Panc1 (cell line): ENCODE measurements at regions of chr1 and their contacts with region 1.

Region 1: GRCh38 chr1:155017041-155017945 is 14.7 kb downstream of the ZBTB7B start:
- DNase-seq: no peak
- ATAC-seq: peak; percentile 92
- H3K4me3 ChIP-seq: peak overlapping the region; percentile 32 to 38
- H3K27ac ChIP-seq: peak overlapping the region; percentile 78
- H3K4me1 ChIP-seq: peaks cover 31% of the 10 kb centered on the region
- H3K27me3 ChIP-seq: no peaks in the 10 kb centered on the region
- CTCF ChIP-seq: peak; percentile 100

Region 2: GRCh38 chr1:154760469-154760933 is 256.8 kb before region 1 on chr1:
- CTCF ChIA-PET with region 1: no interaction called
- POLR2A ChIA-PET with region 1: no interaction called
- in situ Hi-C with region 1: no loop called
- intact Hi-C with region 1: no loop called
- DNase-seq: no peak
- ATAC-seq: peak; percentile 94
- H3K4me3 ChIP-seq: peak overlapping the region; percentile 5 to 30; a peak in 3 of 4 replicates
- H3K27ac ChIP-seq: no peak overlapping the region
- H3K4me1 ChIP-seq: 0 out of 2 replicates have a peak, but pooled peaks cover 2% of the 10 kb centered on the region
- H3K27me3 ChIP-seq: peaks cover 44% of the 10 kb centered on the region
- CTCF ChIP-seq: peak; percentile 93

Region 3: GRCh38 chr1:154812911-154813816 is 204.1 kb before region 1 on chr1:
- CTCF ChIA-PET with region 1: interaction called, 16 read pairs
- POLR2A ChIA-PET with region 1: no interaction called
- in situ Hi-C with region 1: no loop called
- intact Hi-C with region 1: no loop called
- DNase-seq: no peak
- ATAC-seq: no peak
- H3K4me3 ChIP-seq: no peak overlapping the region
- H3K27ac ChIP-seq: no peak overlapping the region
- H3K4me1 ChIP-seq: no peaks in the 10 kb centered on the region
- H3K27me3 ChIP-seq: no peaks in the 10 kb centered on the region
- CTCF ChIP-seq: no peak

Region 4: GRCh38 chr1:155029513-155030242 is 12.4 kb after region 1 on chr1:
- CTCF ChIA-PET with region 1: no interaction called
- POLR2A ChIA-PET with region 1: interaction called, 11 read pairs
- in situ Hi-C with region 1: no loop called
- intact Hi-C with region 1: no loop called
- DNase-seq: no peak
- ATAC-seq: no peak
- H3K4me3 ChIP-seq: no peak overlapping the region
- H3K27ac ChIP-seq: no peak overlapping the region
- H3K4me1 ChIP-seq: no peaks in the 10 kb centered on the region
- H3K27me3 ChIP-seq: no peaks in the 10 kb centered on the region
- CTCF ChIP-seq: no peak

Region 5: DNA sequence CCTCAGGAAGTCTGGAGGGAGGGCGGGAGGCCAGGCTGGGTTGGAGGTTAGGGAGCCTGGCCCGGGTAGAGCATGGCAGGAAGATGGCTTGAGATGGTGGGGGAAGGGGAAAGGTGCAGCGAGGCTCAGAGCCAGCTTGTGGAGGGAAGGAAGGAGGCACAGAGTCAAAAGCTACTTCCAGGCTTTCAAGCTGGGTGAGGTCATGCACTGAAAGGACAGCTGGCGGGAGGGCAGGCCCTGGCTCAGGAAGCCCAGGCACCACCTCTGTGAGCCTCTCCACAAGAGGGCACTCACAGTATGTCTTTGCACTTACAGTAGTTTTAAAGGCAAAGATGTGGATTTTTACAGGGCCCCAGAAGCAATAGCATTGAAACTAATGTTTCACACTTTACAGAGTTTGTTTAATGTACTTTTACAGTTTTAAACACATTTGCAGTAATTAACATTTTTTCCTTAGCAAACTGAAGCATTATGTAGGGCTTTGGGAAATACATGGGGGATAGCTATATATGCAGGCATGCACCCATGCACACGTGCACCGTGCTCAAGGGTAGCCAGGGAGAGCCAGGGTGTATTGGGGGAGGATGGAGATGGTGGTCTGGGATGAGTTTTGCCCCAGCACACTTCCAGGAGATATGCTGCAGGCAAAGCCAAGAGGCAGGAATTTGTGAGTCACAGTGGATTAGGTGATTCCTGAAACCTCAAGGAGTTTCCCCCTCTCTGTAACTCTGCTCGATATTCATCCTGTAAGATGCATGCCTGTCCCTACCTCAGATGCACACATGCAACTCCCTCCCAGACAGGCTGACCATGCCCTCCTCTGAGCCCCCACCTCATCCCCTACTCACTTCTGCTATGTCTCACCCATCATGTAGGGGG is 27.8 kb after region 1 on chr1:
- CTCF ChIA-PET with region 1: interaction called, 13 read pairs
- POLR2A ChIA-PET with region 1: no interaction called
- in situ Hi-C with region 1: no loop called
- intact Hi-C with region 1: no loop called
- DNase-seq: peak; percentile 45
- ATAC-seq: peak; percentile 94
- H3K4me3 ChIP-seq: no peak overlapping the region
- H3K27ac ChIP-seq: no peak overlapping the region
- H3K4me1 ChIP-seq: peaks cover 5% of the 10 kb centered on the region
- H3K27me3 ChIP-seq: no peaks in the 10 kb centered on the region
- CTCF ChIP-seq: peak; percentile 89